ENCODE measurements at regions of chr10 and their contacts with region 1.

Region 1: DNA sequence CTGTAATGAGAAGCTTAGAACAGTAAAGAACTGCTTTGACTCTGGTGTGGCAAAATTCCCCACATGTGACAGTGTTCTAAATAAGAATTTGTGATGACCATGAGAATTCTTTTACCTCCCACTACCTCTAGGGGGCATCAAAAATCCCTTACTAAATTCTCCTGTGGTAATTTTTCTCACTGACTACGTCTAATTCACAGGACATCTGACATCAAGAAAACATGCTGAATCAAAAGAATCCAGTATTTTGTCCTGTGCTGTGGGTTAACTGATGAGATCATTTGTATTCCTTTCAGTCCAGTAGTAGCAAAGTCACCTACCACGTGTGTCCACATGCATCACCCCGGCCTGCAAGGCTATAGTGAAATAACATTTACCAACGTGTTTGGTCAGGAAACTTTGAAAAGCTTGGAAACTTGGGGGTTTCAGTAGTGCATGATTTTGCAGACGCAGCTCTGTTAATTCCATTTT is 103.8 kb downstream of the ATE1 start:
- DNase-seq: peak; percentile 57
- H3K27ac ChIP-seq: no peak overlapping the region
- CTCF ChIP-seq: peak; percentile 61

Region 2: GRCh38 chr10:121694966-121695643 is 128.9 kb before region 1 on chr10:
- CTCF ChIA-PET with region 1: no interaction called
- POLR2A ChIA-PET with region 1: no interaction called
- DNase-seq: no peak
- H3K27ac ChIP-seq: no peak overlapping the region
- CTCF ChIP-seq: no peak

Region 3: DNA sequence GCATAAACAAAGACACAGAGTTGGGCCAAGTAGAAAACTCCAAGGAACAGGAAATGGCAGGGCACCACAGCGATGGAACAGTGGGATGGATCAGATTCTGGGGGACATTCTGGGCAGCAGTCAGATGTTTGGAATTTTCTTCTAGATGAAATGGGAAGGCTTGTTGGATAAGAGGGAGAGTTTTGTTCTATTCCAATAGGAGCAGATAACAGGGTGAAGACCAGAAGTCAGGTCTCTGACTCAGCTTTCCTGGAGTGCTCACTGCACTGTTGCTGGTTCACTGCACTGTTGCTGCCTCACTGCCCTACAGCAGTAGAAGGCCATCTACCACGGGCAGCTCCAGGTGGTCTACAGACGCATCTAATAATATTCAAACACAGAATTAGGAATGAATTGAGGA is 31.8 kb before region 1 on chr10:
- CTCF ChIA-PET with region 1: no interaction called
- POLR2A ChIA-PET with region 1: no interaction called
- DNase-seq: no peak
- H3K27ac ChIP-seq: no peak overlapping the region
- CTCF ChIP-seq: no peak

Region 4: GRCh38 chr10:121804460-121804859 is 19.6 kb before region 1 on chr10:
- CTCF ChIA-PET with region 1: interaction called, 11 read pairs
- POLR2A ChIA-PET with region 1: no interaction called
- DNase-seq: peak; percentile 65
- H3K27ac ChIP-seq: no peak overlapping the region
- CTCF ChIP-seq: no peak

Region 5: GRCh38 chr10:121845044-121845784 is 21.2 kb after region 1 on chr10:
- CTCF ChIA-PET with region 1: no interaction called
- POLR2A ChIA-PET with region 1: no interaction called
- DNase-seq: no peak
- H3K27ac ChIP-seq: no peak overlapping the region
- CTCF ChIP-seq: no peak

Measured in RWPE1 (cell line).